ENCODE measurements at regions of chr12 and their contacts with region 1.

Region 1: GRCh38 chr12:59317598-59317997 is 278.2 kb upstream of the SLC16A7 start:
- DNase-seq: no peak
- H3K4me3 ChIP-seq: no peak overlapping the region
- H3K4me3 Mint-ChIP-seq: no peak overlapping the region
- H3K27ac Mint-ChIP-seq: no peak overlapping the region
- H3K4me1 ChIP-seq: no peaks in the 10 kb centered on the region
- H3K4me1 Mint-ChIP-seq: no peaks in the 10 kb centered on the region
- H3K27me3 ChIP-seq: no peaks in the 10 kb centered on the region
- H3K27me3 Mint-ChIP-seq: no peaks in the 10 kb centered on the region
- CTCF ChIP-seq: no peak

Region 2: DNA sequence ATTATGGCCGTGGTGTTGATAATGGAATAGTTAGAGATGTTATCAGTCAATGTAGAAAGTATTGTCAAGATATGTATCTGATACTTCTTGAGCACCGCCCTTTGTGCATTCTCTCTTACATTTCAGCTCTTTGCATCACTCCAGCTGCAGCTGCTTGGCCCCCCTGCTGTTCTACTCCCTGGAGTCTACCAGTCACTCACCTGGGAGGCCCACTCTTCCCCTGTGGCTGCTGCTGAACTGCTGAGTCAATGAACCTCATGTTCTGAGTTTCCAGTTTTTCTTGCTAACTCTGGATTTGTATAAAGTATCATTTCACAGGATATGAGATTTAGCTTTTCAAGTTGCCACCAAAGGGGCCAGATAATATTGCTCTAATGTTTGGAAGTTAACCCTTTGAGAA is 34.6 kb before region 1 on chr12:
- CTCF ChIA-PET with region 1: no interaction called
- POLR2A ChIA-PET with region 1: no interaction called
- intact Hi-C with region 1: loop called (anchors 1 kb)
- DNase-seq: peak in 1 of 2 experiments; percentile 9
- H3K4me3 ChIP-seq: no peak overlapping the region
- H3K4me3 Mint-ChIP-seq: no peak overlapping the region
- H3K27ac Mint-ChIP-seq: no peak overlapping the region
- H3K4me1 ChIP-seq: no peaks in the 10 kb centered on the region
- H3K4me1 Mint-ChIP-seq: no peaks in the 10 kb centered on the region
- H3K27me3 ChIP-seq: no peaks in the 10 kb centered on the region
- H3K27me3 Mint-ChIP-seq: peaks cover 3% of the 10 kb centered on the region
- CTCF ChIP-seq: no peak